HEK293 (cell line): ENCODE measurements at regions of chr17 and their contacts with region 1.

Region 1: DNA sequence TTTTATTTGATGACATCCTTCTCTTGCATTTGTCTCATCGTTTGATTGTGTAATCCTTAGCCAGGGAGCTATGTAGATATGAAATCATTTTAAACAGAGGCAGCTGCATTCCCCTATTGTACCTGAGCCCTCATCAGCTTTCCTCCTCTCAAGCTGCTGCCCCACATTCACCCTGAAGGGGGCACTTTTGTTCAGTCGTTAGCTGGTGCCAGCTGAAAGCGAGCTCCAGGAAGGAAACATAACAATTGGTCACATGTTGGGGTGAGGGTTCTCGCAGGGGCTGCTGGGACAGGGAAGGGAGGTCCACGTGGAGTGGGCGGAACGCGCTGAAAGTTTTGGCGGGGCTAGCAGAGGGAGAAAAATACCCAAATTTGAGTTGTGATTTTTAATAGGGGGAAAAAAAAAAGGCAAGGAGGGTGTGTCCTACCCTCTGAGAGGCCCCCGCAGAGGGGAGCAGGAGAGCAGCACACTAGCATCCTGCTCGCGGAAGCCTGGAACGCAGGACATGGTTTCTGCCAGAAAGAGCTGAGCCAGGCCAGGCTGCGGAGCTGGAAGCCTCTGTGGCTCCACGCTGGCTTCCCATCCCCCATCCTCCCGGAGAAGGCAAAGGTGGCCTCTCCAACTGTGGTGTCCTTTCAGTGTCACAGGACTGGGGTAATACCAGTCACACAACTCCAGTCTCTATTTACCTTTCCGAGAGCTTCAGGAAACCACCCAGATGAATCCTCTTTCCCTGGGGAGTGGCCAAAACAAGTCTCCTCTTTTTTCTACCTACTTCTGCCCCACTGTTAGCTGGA is 8.5 kb upstream of the MSL1 start:
- H3K4me3 ChIP-seq: peak overlapping the region; percentile 38
- H3K27ac ChIP-seq: peak overlapping the region; percentile 79
- H3K4me1 ChIP-seq: peaks cover 31% of the 10 kb centered on the region
- CTCF ChIP-seq: peak; percentile 80; the same call in 1 of the 2 replicates

Region 2: GRCh38 chr17:40038882-40039513 is 74.3 kb before region 1 on chr17:
- CTCF ChIA-PET with region 1: interaction called, 135 read pairs
- POLR2A ChIA-PET with region 1: interaction called, 17 read pairs
- H3K4me3 ChIP-seq: no peak overlapping the region
- H3K27ac ChIP-seq: no peak overlapping the region
- H3K4me1 ChIP-seq: no peaks in the 10 kb centered on the region
- CTCF ChIP-seq: no peak

Region 3: GRCh38 chr17:40086150-40087044 is 26.9 kb before region 1 on chr17:
- CTCF ChIA-PET with region 1: interaction called, 24 read pairs
- POLR2A ChIA-PET with region 1: interaction called, 6 read pairs
- H3K4me3 ChIP-seq: no peak overlapping the region
- H3K27ac ChIP-seq: no peak overlapping the region
- H3K4me1 ChIP-seq: no peaks in the 10 kb centered on the region
- CTCF ChIP-seq: peak; percentile 65; the same call in 1 of the 2 replicates

Region 4: DNA sequence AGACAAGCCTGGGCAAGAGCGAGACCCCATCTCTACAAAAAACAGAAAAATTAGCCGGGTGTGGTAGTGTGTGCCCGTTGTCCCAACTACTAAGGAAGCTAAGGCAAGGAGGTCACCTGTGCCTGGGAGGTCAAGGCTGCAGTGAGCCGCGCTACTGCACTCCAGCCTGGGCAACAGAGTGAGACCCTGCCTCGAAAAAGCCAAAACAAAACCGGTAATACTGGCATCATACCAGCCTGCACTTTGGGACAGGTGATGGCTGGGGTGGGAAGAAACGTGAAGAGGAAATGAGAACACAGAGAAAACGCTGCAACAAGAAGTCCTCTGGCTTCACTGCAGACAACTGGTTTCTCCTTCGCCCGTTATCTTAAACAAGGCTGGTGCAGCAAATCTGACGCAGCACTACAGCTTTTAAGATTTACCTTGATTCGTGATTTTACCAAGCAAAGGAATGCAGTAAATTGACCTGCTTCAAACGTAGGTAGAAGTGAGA is 26.3 kb after region 1 on chr17:
- CTCF ChIA-PET with region 1: interaction called, 26 read pairs
- POLR2A ChIA-PET with region 1: interaction called, 94 read pairs
- H3K4me3 ChIP-seq: peak overlapping the region; percentile 37
- H3K27ac ChIP-seq: peak overlapping the region; percentile 85
- H3K4me1 ChIP-seq: peaks cover 8% of the 10 kb centered on the region
- CTCF ChIP-seq: no peak

Region 5: GRCh38 chr17:40168262-40168832 is 55.0 kb after region 1 on chr17:
- CTCF ChIA-PET with region 1: interaction called, 182 read pairs
- POLR2A ChIA-PET with region 1: interaction called, 32 read pairs
- H3K4me3 ChIP-seq: no peak overlapping the region
- H3K27ac ChIP-seq: peak overlapping the region; percentile 37; the same call in 1 of the 2 replicates
- H3K4me1 ChIP-seq: no peaks in the 10 kb centered on the region
- CTCF ChIP-seq: peak; percentile 52

Region 6: GRCh38 chr17:40203131-40203530 is 89.8 kb after region 1 on chr17:
- CTCF ChIA-PET with region 1: interaction called, 15 read pairs
- POLR2A ChIA-PET with region 1: interaction called, 6 read pairs
- H3K4me3 ChIP-seq: no peak overlapping the region
- H3K27ac ChIP-seq: no peak overlapping the region
- H3K4me1 ChIP-seq: no peaks in the 10 kb centered on the region
- CTCF ChIP-seq: no peak